ENCODE measurements at regions of chr1 and their contacts with region 1.

Region 1: DNA sequence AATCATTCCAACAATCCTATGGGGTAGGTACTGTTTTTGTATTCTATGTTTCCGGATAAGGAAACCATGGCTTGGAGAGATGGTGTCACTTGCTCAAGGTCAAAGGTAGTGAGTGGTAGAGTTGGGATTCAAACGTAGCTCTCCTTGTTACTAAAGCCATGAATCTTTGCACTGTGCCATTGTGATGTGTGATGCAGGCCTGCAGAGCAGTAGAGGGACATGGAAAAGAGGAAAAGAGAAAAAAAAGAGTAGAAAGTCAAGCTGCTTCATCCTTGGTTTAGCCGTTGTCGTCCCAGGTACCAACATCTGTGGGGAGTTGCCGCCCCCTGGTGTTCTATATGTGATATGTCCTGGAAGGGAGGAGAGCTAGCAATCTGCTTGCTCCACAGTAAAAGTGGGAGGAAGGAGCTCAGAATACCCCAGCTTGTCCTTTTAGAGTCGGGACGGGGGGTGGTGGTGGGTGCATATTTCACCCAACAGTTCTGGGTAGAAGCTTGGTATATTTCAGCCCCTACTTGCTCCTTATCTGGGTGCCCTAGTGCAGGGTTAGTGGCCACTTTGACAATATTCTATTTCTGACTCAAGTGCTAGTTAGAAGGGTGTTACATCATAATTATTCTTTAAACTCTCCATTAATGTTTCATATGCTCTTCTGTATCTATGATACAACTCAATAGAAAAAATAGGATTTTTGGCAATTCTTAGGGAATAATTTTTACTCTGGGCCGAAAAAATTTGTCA is 98.4 kb downstream of the EBNA1BP2 start:
- DNase-seq: peak; percentile 66 to 89
- ATAC-seq: peak; percentile 80 to 98 (median 95)
- H3K4me3 ChIP-seq: no peak overlapping the region
- H3K4me3 Mint-ChIP-seq: no peak overlapping the region
- H3K27ac ChIP-seq: no peak overlapping the region
- H3K27ac Mint-ChIP-seq: no peak overlapping the region
- H3K4me1 ChIP-seq: peaks cover 9% of the 10 kb centered on the region
- H3K4me1 Mint-ChIP-seq: peaks cover 5 to 18% of the 10 kb centered on the region in 2 donors
- H3K27me3 ChIP-seq: no peaks in the 10 kb centered on the region
- H3K27me3 Mint-ChIP-seq: no peaks in the 10 kb centered on the region
- CTCF ChIP-seq: peak; percentile 84

Region 2: GRCh38 chr1:42866549-42866948 is 207.1 kb before region 1 on chr1:
- intact Hi-C with region 1: no loop called
- DNase-seq: no peak
- ATAC-seq: no peak
- H3K4me3 ChIP-seq: no peak overlapping the region
- H3K4me3 Mint-ChIP-seq: no peak overlapping the region
- H3K27ac ChIP-seq: no peak overlapping the region
- H3K27ac Mint-ChIP-seq: no peak overlapping the region
- H3K4me1 ChIP-seq: no peaks in the 10 kb centered on the region
- H3K4me1 Mint-ChIP-seq: no peaks in the 10 kb centered on the region
- H3K27me3 ChIP-seq: peaks cover 2% of the 10 kb centered on the region
- H3K27me3 Mint-ChIP-seq: peaks cover 18 to 24% of the 10 kb centered on the region in 2 donors
- CTCF ChIP-seq: no peak

Region 3: GRCh38 chr1:42913426-42914091 is 160.1 kb before region 1 on chr1:
- intact Hi-C with region 1: loop called (anchors 1 kb)
- DNase-seq: peak in 1 of 2 donors; percentile 88
- ATAC-seq: peak; percentile 83 to 90 (median 85)
- H3K4me3 ChIP-seq: no peak overlapping the region
- H3K4me3 Mint-ChIP-seq: peak overlapping the region; percentile 17
- H3K27ac ChIP-seq: no peak overlapping the region
- H3K27ac Mint-ChIP-seq: no peak overlapping the region
- H3K4me1 ChIP-seq: peaks cover 17% of the 10 kb centered on the region
- H3K4me1 Mint-ChIP-seq: peaks cover 18 to 32% of the 10 kb centered on the region in 2 donors
- H3K27me3 ChIP-seq: no peaks in the 10 kb centered on the region
- H3K27me3 Mint-ChIP-seq: no peaks in the 10 kb centered on the region
- CTCF ChIP-seq: peak; percentile 81